OCI-LY7 (cell line): ENCODE measurements at regions of chr6 and their contacts with region 1.

Region 1: DNA sequence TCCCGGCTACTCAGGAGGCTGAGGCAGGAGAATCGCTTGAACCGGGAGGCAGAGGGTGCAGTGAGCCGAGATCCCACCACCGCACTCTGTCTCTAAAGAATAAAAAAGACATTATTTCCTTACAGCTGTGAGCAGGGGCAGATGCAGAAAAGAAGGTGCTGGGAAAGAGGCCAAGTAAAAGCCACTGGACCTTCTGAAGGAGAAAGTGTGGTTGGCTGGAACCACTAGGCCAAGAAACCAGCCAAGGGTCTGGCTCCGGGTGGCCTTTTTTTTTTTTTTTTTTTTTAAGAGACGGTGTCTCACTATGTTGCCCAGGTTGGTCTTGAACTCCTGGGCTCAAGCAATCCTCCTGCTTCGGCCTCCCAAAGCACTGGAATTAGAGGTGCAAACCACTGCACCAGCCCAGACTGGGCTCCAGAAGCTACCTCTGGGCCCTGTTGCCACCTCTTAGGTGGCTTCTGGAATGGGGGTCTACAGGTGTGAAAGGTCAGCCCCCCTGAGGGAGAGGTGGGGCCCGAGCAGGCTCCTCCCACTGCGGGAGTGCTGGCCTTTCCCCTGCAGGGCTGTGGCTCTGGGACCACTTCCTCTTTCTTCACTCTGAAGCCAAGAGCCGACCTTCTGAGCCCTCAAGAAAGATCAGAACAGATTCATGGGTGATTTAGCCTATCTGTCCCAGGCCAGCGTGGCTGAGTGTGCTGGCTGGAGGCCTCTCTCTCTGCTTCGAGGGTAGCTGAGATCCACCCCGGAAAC is at the start of gene FGD2:
- DNase-seq: peak; percentile 90
- H3K4me3 ChIP-seq: peak within 1 kb of the TSS; percentile 70
- H3K27ac ChIP-seq: peak within 1 kb of the TSS; percentile 70
- H3K4me1 ChIP-seq: peaks cover 65% of the 10 kb centered on the region
- CTCF ChIP-seq: no peak
- total RNA-seq, gene FGD2: 23.8 and 27.8 TPM in 2 replicates

Region 2: DNA sequence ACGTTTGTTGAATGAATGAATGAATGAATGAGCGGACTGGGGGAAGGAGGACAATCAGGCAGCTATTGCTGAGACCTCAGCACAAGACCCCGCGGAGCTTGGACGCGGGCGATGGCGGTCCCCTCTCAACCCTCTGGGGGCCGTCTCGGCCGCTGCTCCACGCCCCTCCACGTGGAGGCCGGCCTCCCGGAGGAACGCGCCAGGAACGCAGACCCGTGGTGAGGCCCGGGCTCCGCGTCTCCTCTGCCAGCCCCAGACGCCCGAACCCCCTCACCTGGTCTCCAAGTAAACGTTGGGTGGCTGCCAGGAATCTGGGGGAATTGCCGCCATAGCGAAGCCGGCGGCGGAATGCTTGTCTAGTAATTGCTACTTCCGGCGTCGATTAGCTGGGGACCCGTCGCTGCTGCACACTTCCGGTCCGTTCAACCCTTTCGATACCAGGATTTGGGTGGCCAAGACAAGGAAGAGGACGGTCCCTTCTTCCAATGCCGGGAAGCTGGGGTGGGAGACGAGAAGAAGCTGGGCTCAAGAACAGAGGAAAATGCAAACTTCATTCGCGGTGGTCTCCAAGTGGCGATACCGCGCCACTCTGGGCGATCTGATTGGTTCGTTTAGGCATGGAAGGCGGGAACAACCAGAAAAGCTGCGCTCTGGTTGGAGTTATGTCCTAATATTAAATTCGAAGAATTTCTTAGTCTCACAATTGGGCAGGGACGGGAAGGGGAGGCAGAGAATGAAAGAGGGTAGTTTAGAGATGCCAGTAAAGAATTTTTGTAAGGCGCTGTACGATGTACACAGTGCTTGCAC is 130.6 kb before region 1 on chr6 and contains the start of gene PPIL1:
- CTCF ChIA-PET with region 1: interaction called, 3 read pairs
- POLR2A ChIA-PET with region 1: interaction called, 24 read pairs
- intact Hi-C with region 1: loop called (anchors 1 kb)
- DNase-seq: peak; percentile 94
- H3K4me3 ChIP-seq: peak within 1 kb of the TSS; percentile 88
- H3K27ac ChIP-seq: peak within 1 kb of the TSS; percentile 68
- H3K4me1 ChIP-seq: peaks cover 24% of the 10 kb centered on the region
- CTCF ChIP-seq: 0 out of 2 replicates have a peak, but pooled peaks have one; percentile 15
- total RNA-seq, gene PPIL1: 34.6 and 38.9 TPM in 2 replicates

Region 3: DNA sequence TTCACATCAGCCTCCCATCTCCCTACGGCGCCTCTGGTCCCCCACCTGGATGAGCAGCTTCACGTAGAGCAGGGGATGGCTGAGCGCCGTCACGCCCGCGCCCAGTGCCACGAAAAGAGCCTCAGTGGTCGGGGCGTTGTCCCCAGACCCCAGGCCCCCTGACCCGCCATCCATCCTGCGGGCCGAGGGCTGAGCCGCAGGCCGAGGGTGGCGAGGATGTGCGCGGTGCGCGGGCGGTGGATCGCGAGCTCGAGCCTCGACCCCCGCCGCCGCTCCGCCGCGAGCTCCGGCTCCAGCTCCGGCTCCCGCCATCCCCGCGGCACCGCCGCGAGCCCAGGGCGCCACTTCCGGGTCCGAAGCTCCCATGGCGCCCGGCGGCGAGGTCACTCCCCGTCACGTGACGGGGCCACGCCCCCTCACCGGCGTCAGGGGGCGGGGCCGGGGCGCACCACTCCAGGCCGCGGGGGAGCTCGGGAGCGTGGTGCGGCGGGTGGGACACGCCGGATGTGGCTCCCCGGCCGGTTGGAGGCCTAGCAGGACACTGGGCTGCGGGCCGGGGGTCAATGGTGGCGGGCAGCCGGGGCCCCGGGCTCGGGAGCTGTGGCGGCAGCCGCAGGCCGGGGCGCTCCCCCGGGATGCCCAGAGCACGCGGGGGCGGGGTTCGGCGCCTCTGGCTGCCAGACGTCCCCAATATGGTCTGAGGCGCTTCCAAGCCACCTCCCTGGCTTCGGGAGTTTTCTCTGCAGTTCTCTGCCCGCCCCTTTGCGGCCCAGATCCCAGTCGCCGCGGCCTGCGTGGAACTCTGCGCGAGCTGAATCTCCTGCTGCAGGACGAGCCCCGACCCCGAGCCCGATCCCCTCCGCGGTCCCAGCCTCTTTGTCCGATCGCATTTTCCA is 19.2 kb before region 1 on chr6 and contains the start of gene MTCH1:
- CTCF ChIA-PET with region 1: interaction called, 3 read pairs
- POLR2A ChIA-PET with region 1: interaction called, 32 read pairs
- intact Hi-C with region 1: loop called (anchors 1 kb)
- DNase-seq: peak; percentile 93
- H3K4me3 ChIP-seq: peak within 1 kb of the TSS; percentile 98
- H3K27ac ChIP-seq: peak within 1 kb of the TSS; percentile 49
- H3K4me1 ChIP-seq: peaks cover 42% of the 10 kb centered on the region
- CTCF ChIP-seq: no peak
- total RNA-seq, gene MTCH1: 81.4 and 93.7 TPM in 2 replicates

Region 4: GRCh38 chr6:37083243-37084138 is 78.3 kb after region 1 on chr6:
- CTCF ChIA-PET with region 1: no interaction called
- POLR2A ChIA-PET with region 1: interaction called, 13 read pairs
- intact Hi-C with region 1: no loop called
- DNase-seq: no peak
- H3K4me3 ChIP-seq: no peak overlapping the region
- H3K27ac ChIP-seq: no peak overlapping the region
- H3K4me1 ChIP-seq: no peaks in the 10 kb centered on the region
- CTCF ChIP-seq: no peak